Activated CD4-positive, alpha-beta memory T cell treated with anti-CD3 and anti-CD28 coated beads, Interleukin-2, amount 10 ng/mL, durations not matched to agents 7 days and 5 days (primary cell): ENCODE measurements at regions of chr3 and their contacts with region 1.

Region 1: DNA sequence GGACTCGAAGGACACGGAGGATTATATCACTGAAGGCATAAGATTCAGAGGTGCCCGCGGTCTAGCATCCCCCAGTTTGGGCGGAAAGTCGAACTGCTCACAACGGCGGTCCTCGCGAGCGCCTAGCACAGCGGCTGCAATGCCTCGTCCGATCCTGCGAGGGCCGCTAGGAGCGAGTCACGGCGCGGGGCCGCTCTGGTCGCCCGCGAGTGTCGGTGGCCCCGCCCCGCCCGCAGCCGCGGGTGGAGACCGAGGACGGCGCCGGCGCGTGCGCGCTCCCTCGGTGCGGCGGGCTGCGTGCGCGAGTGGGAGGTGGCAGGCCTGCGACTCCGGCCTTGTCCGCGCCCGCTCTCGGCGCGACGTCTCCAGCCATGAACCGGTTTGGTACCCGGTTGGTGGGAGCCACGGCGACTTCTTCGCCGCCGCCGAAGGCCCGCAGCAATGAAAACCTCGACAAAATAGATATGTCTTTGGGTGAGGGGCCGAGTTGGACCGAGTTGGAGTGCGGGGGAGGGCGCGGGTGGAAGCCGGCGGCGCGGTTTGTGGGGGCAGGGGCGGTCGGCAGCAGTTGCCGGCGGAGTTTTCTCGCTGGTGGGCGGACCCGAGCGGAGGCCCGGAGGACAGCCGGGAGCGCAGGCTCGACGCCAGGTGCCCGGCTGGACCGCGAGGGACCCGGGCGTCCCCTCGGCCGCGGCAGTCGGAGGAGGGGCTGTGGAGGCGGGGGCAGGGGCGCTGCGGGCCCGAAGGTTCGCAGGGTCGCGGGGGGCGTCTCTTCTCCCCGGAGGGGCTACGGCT is at the start of gene FYTTD1:
- DNase-seq: peak; percentile 87
- H3K4me3 Mint-ChIP-seq: peak within 1 kb of the TSS; percentile 94
- H3K27ac Mint-ChIP-seq: peak within 1 kb of the TSS; percentile 84
- H3K4me1 Mint-ChIP-seq: peaks cover 35% of the 10 kb centered on the region
- H3K27me3 Mint-ChIP-seq: no peaks in the 10 kb centered on the region
- total RNA-seq, gene FYTTD1: 41.7 to 45.1 TPM

Region 2: DNA sequence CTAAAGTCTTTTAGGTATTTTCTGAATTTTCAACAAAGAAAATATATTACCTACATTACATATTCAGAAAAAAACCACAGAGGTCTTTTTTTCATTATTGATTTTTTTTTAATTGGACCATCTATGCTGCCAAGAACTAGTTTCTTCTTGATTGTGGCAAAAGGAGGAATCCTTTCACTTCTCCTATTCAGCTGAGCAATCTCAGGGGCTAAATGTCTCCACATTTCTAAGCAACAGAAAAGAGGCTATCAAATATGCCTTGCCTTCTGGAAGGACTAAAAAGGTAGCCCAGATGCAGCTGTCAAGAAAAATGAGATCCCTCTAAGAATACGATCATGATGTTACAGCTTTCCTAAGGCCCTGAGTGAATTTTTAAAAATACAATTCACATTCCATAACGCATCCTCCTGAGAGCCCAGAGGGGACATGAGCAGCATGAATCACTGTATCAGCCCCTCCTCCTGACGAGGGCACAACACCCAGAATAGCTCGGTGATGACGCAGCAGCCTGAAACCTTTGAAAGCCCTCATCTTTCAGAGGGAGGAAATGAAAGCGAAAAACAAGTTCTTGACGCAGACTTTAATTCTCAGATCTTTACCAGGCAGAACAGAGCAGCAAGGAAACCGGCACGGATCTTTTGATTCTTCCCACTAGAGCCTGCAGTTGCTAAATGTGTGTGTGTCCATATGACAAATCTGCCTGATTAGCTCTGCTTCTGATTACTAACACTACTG is 37.7 kb before region 1 on chr3:
- CTCF ChIA-PET with region 1: no interaction called
- POLR2A ChIA-PET with region 1: interaction called, 16 read pairs
- DNase-seq: peak; percentile 90
- H3K4me3 Mint-ChIP-seq: peak overlapping the region; percentile 74
- H3K27ac Mint-ChIP-seq: peak overlapping the region; percentile 98
- H3K4me1 Mint-ChIP-seq: peaks cover 41% of the 10 kb centered on the region
- H3K27me3 Mint-ChIP-seq: no peaks in the 10 kb centered on the region

Region 3: GRCh38 chr3:197736491-197737318 is 13.1 kb before region 1 on chr3 and contains the start of gene RUBCN:
- CTCF ChIA-PET with region 1: interaction called, 3 read pairs
- POLR2A ChIA-PET with region 1: interaction called, 12 read pairs
- DNase-seq: peak; percentile 95
- H3K4me3 Mint-ChIP-seq: peak within 1 kb of the TSS; percentile 92
- H3K27ac Mint-ChIP-seq: peak within 1 kb of the TSS; percentile 92
- H3K4me1 Mint-ChIP-seq: peaks cover 41% of the 10 kb centered on the region
- H3K27me3 Mint-ChIP-seq: no peaks in the 10 kb centered on the region
- total RNA-seq, gene RUBCN: 46.8 to 47.4 TPM

Region 4: GRCh38 chr3:197830308-197830966 is 80.6 kb after region 1 on chr3:
- CTCF ChIA-PET with region 1: no interaction called
- POLR2A ChIA-PET with region 1: no interaction called
- DNase-seq: no peak
- H3K4me3 Mint-ChIP-seq: no peak overlapping the region
- H3K27ac Mint-ChIP-seq: no peak overlapping the region
- H3K4me1 Mint-ChIP-seq: peaks cover 5% of the 10 kb centered on the region
- H3K27me3 Mint-ChIP-seq: no peaks in the 10 kb centered on the region